BJ (cell line): ENCODE measurements at regions of chr1 and their contacts with region 1.

Region 1: GRCh38 chr1:30718636-30719405 is 4.6 kb downstream of the MATN1 start:
- DNase-seq: peak; percentile 73
- H3K4me3 ChIP-seq: peak overlapping the region; percentile 46
- H3K27me3 ChIP-seq: no peaks in the 10 kb centered on the region; the same call in 1 of the 2 replicates
- CTCF ChIP-seq: peak; percentile 88

Region 2: DNA sequence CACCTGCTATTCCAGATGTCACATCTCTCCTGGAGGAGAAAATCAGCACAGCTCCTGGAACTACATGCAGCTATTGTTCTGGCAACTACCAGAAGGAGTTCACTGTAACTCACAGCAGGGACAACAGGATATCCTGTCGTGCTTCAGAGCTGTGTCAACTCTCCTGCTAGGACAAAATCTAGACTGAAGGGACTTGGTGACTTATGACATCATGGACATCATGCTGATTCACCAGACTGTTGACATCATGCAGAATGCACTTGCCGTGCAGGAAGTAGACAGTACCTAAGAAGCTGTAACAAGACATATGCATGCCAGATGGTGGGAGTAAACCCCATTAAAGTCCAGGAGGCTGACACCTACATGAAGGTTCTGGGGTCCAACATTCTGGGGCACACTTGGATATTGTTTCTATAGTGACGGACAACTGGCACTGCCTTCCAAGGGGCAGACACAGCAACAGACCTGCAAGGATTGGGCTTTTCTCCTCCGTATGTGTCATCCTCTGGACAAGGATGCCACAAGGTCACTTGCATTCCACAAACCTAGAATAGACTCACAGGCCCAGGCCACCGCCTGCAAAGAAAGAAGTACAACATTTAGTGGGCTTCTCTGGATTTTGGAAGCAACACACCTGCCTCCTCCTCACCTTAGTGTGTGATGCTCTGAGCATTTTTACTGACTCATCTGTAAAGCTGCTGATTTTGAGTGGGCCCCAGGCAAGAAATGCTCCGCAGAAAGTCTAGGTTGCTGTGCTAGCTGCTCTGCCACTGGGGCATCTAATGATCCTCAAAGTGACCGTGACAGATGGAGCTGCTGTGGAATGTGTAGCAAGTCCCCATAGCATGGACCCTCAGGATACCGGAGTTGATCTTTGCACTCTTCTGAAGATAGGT is 244.7 kb before region 1 on chr1:
- CTCF ChIA-PET with region 1: no interaction called
- POLR2A ChIA-PET with region 1: no interaction called
- DNase-seq: no peak
- H3K4me3 ChIP-seq: no peak overlapping the region
- H3K27me3 ChIP-seq: peaks cover 1% of the 10 kb centered on the region; the same call in 1 of the 2 replicates
- CTCF ChIP-seq: no peak

Region 3: GRCh38 chr1:30527511-30528140 is 191.2 kb before region 1 on chr1:
- CTCF ChIA-PET with region 1: no interaction called
- POLR2A ChIA-PET with region 1: no interaction called
- DNase-seq: no peak
- H3K4me3 ChIP-seq: no peak overlapping the region
- H3K27me3 ChIP-seq: no peaks in the 10 kb centered on the region
- CTCF ChIP-seq: no peak

Region 4: GRCh38 chr1:30732277-30732996 is 13.6 kb after region 1 on chr1:
- CTCF ChIA-PET with region 1: interaction called, 48 read pairs
- POLR2A ChIA-PET with region 1: interaction called, 3 read pairs
- DNase-seq: no peak
- H3K4me3 ChIP-seq: no peak overlapping the region
- H3K27me3 ChIP-seq: peaks cover 4% of the 10 kb centered on the region
- CTCF ChIP-seq: no peak

Region 5: DNA sequence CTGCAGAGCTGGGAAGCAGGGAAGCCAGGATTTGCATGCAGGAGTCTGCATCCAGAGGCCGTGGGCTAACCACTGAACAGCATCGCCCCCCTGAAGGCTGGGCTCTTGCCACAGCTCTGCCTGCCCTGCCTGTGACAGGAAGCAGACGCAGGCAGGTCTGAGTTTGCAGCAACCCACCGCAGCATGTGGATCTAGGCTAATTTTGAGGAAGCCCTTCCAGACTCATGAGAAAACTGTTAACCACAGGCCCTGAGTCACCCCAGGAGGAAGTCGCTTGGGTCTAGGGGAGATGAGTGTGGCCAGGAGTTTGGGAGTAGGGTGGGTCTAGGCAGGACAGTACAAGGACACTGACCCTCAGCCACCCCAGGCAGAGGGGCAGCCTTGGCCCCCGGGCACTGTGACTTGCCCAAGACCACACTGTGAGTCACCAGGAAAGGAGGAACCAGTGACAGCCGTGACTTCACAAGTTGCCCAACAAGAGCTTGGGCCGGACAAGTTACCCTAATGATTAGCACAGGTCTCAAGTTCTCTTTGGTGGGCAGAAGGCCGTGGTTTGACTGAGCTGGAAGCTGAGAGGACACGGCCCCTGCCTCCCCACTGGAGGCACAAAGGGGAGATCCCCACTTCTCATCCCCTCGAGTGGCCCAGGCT is 37.8 kb after region 1 on chr1:
- CTCF ChIA-PET with region 1: interaction called, 49 read pairs
- POLR2A ChIA-PET with region 1: no interaction called
- DNase-seq: peak; percentile 73
- H3K4me3 ChIP-seq: no peak overlapping the region
- H3K27me3 ChIP-seq: no peaks in the 10 kb centered on the region
- CTCF ChIP-seq: no peak

Region 6: DNA sequence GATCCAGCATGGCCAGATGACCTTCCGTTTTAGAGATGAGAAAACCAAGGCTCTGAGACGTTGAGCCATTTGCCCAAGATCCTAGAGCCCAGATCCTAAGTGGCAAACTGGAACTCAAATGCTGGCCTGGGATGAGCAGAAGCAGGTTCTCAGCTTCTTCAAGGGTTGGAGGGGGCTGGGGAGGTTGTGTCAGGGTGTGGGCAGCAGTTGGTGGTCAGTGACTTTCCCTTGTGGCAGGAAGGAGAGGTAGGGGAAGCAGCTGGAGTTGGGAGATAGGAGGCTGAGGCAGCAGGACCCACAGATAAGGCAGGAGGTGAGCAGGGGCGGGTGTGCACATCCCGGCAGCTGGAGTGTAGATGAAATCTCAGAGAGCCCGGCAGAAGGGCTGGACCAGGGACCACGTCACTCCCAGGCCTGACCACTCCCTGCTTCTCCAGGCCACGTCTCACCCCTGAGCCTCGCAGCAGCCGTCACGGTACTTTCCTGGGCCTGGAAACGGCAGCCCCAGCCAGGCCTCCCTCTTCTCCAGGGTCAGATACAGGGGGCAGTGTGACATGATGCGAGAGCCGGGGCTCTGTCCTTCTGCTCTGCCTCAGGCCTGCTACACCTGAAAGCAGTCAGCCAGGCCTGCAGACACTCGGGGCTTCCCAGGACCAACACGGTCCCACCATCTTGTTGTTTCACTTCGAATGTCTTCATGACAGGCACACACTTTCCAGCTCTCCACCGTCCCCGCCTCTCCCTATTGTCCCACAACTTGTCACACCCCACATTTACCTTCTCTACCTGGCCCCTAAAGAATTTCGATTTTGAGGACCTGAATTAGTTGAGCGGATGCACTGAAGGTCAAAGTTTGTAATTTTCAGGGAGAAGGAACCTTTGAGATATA is 50.3 kb after region 1 on chr1:
- CTCF ChIA-PET with region 1: interaction called, 354 read pairs
- POLR2A ChIA-PET with region 1: no interaction called
- DNase-seq: no peak
- H3K4me3 ChIP-seq: no peak overlapping the region
- H3K27me3 ChIP-seq: peaks cover 9% of the 10 kb centered on the region
- CTCF ChIP-seq: no peak

Region 7: DNA sequence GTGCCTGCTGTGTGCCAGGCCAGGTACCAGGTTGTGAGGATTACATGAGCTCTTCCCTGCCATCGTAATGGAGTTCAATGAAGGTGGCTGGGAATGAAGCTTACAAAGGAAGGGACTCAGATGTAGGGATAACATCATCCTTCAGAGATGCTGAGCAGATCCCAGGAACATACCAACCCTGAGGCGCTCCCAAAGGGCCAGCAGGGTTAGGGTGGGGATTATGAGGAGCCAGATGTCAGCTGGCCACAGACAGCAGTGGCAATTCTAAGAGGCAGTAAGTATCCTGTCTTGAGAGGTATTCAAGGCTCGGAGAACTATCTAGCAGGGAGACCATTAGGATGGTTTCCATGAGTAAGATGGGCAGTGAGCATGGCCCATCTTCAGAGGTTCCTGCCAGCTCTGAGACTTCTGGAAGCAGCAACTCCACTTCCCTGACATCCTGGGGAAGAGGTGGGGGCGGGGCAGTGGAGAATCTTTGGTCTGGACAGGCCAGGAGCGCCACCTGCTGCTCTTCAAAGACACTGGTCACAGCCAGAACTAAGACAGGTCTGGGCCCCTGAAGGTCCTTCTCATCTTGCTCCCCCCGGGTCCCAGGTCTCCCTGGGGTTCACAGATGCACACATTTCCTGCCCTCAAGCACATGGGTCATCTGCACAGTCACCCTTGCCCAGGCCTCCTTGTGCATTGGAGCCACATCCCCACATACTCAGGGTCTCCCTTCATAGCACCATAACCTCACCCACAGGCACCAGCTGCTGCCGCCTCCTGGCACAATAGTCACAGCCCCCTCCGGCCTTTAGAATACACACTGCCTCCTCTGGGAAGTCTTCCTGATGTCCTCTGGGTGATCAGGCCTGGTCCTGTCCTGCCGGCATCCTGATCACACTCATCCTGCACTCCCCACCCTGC is 192.5 kb after region 1 on chr1:
- CTCF ChIA-PET with region 1: interaction called, 90 read pairs
- POLR2A ChIA-PET with region 1: interaction called, 11 read pairs
- DNase-seq: no peak
- H3K4me3 ChIP-seq: no peak overlapping the region
- H3K27me3 ChIP-seq: no peaks in the 10 kb centered on the region
- CTCF ChIP-seq: peak; percentile 88

Region 8: GRCh38 chr1:31111290-31111977 is 392.6 kb after region 1 on chr1:
- CTCF ChIA-PET with region 1: no interaction called
- POLR2A ChIA-PET with region 1: no interaction called
- DNase-seq: no peak
- H3K4me3 ChIP-seq: no peak overlapping the region
- H3K27me3 ChIP-seq: 0 out of 2 replicates have a peak, but pooled peaks cover 2% of the 10 kb centered on the region
- CTCF ChIP-seq: no peak